Caco-2 (cell line): ENCODE measurements at regions of chr14 and their contacts with region 1.

Region 1: DNA sequence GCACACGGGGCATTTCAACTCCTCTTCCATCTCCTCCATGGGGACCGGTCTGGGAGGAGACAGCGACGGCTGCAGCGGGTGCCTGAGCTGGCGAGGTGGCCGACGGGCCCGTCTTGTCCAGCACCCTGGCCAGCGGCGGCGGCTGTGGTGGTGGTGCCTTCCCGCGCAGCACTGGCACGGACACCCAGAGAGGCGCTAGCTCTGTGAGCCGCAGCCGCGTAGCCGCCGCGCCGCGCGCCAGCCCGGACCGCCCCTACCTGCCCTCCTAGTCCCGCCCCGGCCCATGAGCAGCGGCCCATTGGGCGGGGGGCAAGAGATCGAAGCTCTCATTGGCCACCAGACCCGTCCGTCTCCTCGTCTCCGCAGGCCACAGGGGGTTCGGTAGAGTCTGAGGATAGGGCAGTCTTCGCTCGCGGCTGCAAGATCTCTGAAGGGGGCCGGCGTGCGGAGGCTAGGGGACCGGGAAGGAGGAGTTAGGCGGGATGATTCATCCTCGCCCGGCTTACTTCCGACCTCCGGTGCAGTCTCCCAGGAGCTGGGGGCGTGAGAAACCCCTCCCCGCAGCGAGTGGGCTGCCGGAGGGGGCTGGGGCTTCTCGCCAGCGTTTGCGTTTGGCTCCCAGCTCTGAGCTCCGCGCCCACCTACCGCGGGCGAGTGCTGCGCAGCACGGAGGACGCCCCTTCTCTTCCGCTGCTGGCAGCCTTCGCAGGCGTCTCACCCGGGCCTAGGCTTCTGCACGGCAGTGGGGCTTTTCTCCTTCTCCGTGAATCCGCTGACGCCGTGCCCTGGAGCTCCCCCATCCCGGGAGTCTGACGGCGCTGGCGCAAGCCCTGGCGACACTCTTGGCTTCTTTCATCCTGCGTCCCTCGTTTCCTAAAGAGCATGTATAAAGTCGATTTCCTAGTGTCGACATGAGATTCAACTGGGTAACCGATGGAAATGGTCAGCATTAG is at the start of gene TRIM9:
- DNase-seq: peak; percentile 98 to 99
- H3K4me3 ChIP-seq: peak within 1 kb of the TSS; percentile 60
- H3K4me3 Mint-ChIP-seq: peak within 1 kb of the TSS; percentile 93
- H3K27ac Mint-ChIP-seq: peak within 1 kb of the TSS; percentile 68
- H3K4me1 ChIP-seq: no peaks in the 10 kb centered on the region
- H3K4me1 Mint-ChIP-seq: no peaks in the 10 kb centered on the region
- H3K27me3 ChIP-seq: no peaks in the 10 kb centered on the region
- H3K27me3 Mint-ChIP-seq: peaks cover 3% of the 10 kb centered on the region
- CTCF ChIP-seq: no peak
- total RNA-seq, gene TRIM9: 2.7 and 3.0 TPM in 2 replicates

Region 2: DNA sequence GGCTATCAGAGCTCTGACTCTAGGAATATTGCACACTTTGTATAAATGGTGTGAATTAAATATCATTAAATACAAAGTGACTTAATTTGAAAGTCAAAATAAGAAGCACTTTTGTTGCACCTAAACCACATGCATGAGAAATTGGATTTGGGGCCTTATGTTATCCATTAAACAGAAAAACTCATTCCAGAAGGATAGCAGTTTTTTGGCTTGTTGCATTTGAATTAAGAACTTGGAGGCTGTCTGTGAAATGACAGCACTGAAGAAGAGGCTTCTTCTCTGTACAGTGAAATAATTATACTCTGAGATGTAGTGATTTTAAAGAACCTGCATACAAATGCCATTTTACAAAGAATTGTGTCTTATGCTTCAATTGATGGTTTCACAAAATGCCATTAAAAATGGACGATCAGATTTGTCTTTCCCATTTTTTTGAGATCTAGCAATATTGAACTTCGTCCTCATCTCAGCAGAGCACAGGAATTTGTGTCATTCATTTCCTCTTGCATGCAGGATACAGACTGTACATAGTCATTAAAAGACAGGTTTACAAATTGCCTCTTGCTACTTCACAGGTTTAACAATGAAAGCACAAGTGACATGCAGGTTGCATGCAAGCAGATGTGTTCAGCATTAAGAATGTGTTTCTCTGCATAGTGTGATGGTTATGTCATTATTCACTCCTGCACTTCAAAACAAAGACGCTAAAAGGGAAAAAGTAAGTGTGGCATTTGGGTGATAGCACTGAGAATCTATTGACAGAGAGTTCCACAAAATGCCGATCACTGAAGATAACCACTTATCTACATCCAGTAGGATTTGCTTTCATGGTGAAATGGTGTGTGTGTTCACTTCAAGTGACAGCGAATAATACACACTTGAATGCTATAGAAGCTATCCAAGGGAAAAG is 115.0 kb before region 1 on chr14:
- CTCF ChIA-PET with region 1: no interaction called
- POLR2A ChIA-PET with region 1: no interaction called
- intact Hi-C with region 1: loop called (anchors 5 kb)
- DNase-seq: no peak
- H3K4me3 ChIP-seq: no peak overlapping the region
- H3K4me3 Mint-ChIP-seq: no peak overlapping the region
- H3K27ac Mint-ChIP-seq: no peak overlapping the region
- H3K4me1 ChIP-seq: peaks cover 39% of the 10 kb centered on the region
- H3K4me1 Mint-ChIP-seq: peaks cover 28% of the 10 kb centered on the region
- H3K27me3 ChIP-seq: no peaks in the 10 kb centered on the region
- H3K27me3 Mint-ChIP-seq: no peaks in the 10 kb centered on the region
- CTCF ChIP-seq: no peak

Region 3: GRCh38 chr14:51035611-51036213 is 59.5 kb before region 1 on chr14:
- CTCF ChIA-PET with region 1: interaction called, 4 read pairs
- POLR2A ChIA-PET with region 1: interaction called, 3 read pairs
- intact Hi-C with region 1: loop called (anchors 1 kb)
- DNase-seq: peak; percentile 51 to 61
- H3K4me3 ChIP-seq: no peak overlapping the region
- H3K4me3 Mint-ChIP-seq: peak overlapping the region; percentile 41
- H3K27ac Mint-ChIP-seq: peak overlapping the region; percentile 83
- H3K4me1 ChIP-seq: peaks cover 21% of the 10 kb centered on the region
- H3K4me1 Mint-ChIP-seq: no peaks in the 10 kb centered on the region
- H3K27me3 ChIP-seq: no peaks in the 10 kb centered on the region
- H3K27me3 Mint-ChIP-seq: no peaks in the 10 kb centered on the region
- CTCF ChIP-seq: no peak